Breast epithelium (tissue), 4 donors: ENCODE measurements at regions of chr3 and their contacts with region 1.

Region 1: GRCh38 chr3:54653456-54654195 is 274.2 kb downstream of the LRTM1 start:
- DNase-seq: peak in 1 of 2 donors; percentile 52
- H3K4me3 ChIP-seq: no peak overlapping the region
- H3K27ac ChIP-seq: peak overlapping the region; percentile 43 to 51
- H3K4me1 ChIP-seq: no peaks in the 10 kb centered on the region
- H3K27me3 ChIP-seq: no peaks in the 10 kb centered on the region
- CTCF ChIP-seq: no peak
- POLR2A ChIP-seq: no peak

Region 2: GRCh38 chr3:54433846-54434245 is 219.8 kb before region 1 on chr3:
- intact Hi-C with region 1: no loop called
- DNase-seq: no peak
- H3K4me3 ChIP-seq: no peak overlapping the region
- H3K27ac ChIP-seq: no peak overlapping the region
- H3K4me1 ChIP-seq: no peaks in the 10 kb centered on the region
- H3K27me3 ChIP-seq: no peaks in the 10 kb centered on the region
- CTCF ChIP-seq: no peak
- POLR2A ChIP-seq: no peak

Region 3: GRCh38 chr3:55180936-55181535 is 527.4 kb after region 1 on chr3:
- intact Hi-C with region 1: loop called (anchors 5 kb)
- DNase-seq: no peak
- H3K4me3 ChIP-seq: no peak overlapping the region
- H3K27ac ChIP-seq: no peak overlapping the region
- H3K4me1 ChIP-seq: no peaks in the 10 kb centered on the region
- H3K27me3 ChIP-seq: peaks cover 0 to 4% of the 10 kb centered on the region in 2 donors
- CTCF ChIP-seq: peak; percentile 31 to 64 (median 42)
- POLR2A ChIP-seq: no peak